ENCODE measurements at regions of chr4 and their contacts with region 1.

Region 1: DNA sequence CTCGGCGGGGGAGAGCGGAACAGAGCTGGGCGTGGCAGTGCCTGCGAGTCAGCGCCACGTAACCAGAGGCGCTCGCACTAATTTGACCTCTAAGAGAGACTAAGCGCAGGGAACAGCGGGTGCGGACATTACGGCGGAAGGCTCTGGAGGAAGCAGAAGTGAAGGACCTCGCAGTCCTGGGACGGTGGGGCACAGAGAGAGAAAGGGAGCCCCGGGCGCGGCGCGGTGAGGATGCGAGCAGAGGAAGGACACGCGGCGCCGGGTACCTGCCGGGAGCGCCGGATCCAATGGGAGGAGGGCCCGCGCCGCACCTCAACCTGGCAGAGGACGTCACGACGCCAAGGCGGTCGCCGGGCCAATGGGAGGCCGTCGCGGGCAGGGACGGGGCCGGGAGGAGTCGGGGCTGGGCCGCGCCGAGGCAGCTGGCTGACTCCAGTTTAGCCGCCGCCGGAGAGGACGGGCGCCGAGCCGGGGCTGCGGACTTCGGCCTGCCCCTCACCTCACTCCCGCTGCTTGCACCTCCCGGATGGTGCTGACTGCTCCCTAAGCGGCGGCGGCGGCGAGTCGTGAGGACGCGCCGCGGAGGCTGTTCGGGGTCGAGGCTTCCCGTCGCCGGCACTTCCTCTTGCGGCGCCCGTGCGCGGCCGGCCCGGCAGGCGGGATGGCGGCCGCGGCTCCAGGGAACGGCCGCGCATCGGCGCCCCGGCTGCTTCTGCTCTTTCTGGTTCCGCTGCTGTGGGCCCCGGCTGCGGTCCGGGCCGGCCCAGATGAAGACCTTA is at the start of gene TMEM165:
- DNase-seq: peak; percentile 97
- total RNA-seq, gene TMEM165: 56.4 TPM

Region 2: GRCh38 chr4:55409468-55410171 is 13.9 kb after region 1 on chr4:
- intact Hi-C with region 1: loop called (anchors 1 kb)
- DNase-seq: no peak